ENCODE measurements at regions of chr13 and their contacts with region 1.

Region 1: GRCh38 chr13:44218501-44219240 is 155.0 kb upstream of the SERP2 start:
- DNase-seq: peak in 1 of 2 experiments; percentile 88
- H3K4me3 ChIP-seq: peak overlapping the region; percentile 22; the same call in 1 of the 2 replicates
- H3K27ac ChIP-seq: peak overlapping the region; percentile 89
- H3K4me1 ChIP-seq: peaks cover 28% of the 10 kb centered on the region
- H3K27me3 ChIP-seq: no peaks in the 10 kb centered on the region
- CTCF ChIP-seq: no peak

Region 2: DNA sequence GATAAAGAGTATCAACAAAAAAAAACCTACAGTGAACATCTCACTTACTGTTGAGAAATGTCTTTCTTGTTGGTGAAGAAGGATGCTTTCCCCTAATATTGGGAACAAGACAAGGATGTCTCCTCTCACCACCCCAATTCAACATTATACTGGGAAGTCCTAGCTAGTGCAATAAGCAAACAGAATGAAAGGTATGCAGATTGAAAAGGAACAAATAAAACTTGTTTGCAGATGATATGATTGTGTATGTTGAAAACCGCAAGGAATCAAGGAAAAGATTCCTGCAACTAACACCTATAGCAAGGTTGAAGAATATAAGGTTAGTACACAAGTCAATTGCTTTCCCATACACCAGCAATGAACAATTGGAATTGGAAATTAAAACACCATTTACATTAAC is 310.8 kb after region 1 on chr13:
- CTCF ChIA-PET with region 1: no interaction called
- POLR2A ChIA-PET with region 1: interaction called, 10 read pairs
- intact Hi-C with region 1: no loop called
- DNase-seq: no peak
- H3K4me3 ChIP-seq: no peak overlapping the region
- H3K27ac ChIP-seq: no peak overlapping the region
- H3K4me1 ChIP-seq: peaks cover 12% of the 10 kb centered on the region
- H3K27me3 ChIP-seq: no peaks in the 10 kb centered on the region
- CTCF ChIP-seq: no peak